ENCODE measurements at regions of chr2 and their contacts with region 1.

Region 1: GRCh38 chr2:85132834-85133637 is at the start of gene TCF7L1:
- DNase-seq: peak; percentile 85
- total RNA-seq, gene TCF7L1: 6.0 TPM

Region 2: GRCh38 chr2:85066874-85067351 is 66.1 kb before region 1 on chr2:
- intact Hi-C with region 1: loop called (anchors 5 kb)
- DNase-seq: peak; percentile 79

Region 3: GRCh38 chr2:85243101-85244072 is 110.4 kb after region 1 on chr2:
- intact Hi-C with region 1: loop called (anchors 10 kb)
- DNase-seq: peak; percentile 70

Region 4: DNA sequence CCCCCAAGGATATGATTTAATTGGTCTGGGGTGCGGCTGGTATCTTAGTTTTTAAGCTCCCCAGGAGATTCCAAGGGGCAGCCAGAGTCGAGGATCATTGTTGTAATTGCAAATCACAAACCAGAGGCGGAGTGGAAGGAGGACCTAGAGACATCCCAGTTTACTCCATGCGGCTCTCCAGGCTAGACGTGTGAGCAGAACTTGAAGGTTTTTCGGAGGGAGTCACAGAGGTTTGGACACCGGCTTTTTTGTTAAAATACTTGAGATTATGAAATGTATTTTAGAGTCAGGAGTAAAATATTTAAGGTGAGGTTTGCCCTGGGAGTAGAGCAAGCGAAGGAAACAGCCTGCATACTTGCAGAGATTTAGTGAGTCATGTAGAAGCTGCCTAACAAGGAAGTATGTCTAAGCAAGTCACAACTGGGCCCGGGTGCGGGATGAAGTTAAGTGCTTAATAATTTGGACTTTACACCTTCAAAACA is 155.2 kb after region 1 on chr2:
- intact Hi-C with region 1: loop called (anchors 2 kb)
- DNase-seq: peak; percentile 17

Measured in cardiac septum (tissue), 1 donor.